ENCODE measurements at regions of chr3 and their contacts with region 1.

Region 1: DNA sequence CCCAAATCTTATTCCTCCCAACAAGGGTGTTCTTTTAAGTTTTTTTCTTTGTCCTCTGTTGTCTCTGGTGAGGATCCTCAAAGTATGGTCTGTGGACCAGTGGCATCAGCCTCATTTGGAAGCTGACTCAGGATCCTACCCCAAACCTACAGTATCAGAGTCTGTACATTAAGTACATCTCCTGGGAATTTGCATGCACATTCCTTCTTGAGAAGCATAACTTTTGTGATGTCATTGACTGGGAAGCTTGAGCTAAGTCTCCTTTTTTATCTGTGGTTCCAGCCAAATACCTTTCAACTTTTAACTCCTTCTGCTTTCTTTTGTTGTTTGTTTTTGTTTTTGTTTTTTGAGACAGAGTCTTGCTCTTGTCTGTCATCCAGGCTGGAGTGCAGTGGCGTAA is 40.5 kb downstream of the ARMC8 start:
- DNase-seq: no peak

Region 2: GRCh38 chr3:136380530-136380929 is 1847.1 kb before region 1 on chr3:
- intact Hi-C with region 1: no loop called
- DNase-seq: no peak

Region 3: DNA sequence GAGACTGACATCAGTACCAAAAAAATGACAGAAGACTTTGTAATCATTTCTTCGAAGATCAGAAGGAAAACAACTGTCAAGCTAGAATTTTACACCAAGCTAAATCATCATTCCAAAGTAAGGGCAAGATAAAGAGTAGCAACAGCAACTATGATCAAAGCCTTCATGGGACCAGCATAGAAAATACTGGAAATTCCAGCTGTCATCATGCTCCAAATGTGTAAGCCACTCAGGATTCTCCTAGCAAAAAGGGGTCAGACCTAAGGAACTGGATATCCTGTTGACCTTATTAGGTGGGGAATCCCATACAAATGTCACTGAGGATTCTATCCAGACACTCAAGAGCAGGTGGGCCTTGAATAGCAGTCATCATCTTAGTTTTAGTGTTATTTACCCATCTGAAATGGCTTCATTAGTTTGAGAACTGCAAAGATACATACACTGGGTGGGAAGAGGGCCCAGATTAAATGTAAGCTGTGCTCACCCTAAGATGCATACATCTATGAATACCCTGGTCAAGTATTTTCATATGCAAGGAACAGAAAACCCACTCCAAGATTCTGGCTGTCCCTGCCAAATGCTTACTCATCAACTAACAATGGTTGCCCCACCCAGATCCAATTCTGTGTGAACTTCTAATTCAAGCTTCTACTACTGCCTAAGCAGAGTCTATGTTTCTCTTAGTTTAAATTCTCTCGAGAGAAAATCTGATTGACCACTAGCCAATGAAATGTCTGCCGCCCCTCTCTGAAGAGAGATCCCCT is 184.2 kb before region 1 on chr3:
- intact Hi-C with region 1: no loop called
- DNase-seq: no peak

Region 4: DNA sequence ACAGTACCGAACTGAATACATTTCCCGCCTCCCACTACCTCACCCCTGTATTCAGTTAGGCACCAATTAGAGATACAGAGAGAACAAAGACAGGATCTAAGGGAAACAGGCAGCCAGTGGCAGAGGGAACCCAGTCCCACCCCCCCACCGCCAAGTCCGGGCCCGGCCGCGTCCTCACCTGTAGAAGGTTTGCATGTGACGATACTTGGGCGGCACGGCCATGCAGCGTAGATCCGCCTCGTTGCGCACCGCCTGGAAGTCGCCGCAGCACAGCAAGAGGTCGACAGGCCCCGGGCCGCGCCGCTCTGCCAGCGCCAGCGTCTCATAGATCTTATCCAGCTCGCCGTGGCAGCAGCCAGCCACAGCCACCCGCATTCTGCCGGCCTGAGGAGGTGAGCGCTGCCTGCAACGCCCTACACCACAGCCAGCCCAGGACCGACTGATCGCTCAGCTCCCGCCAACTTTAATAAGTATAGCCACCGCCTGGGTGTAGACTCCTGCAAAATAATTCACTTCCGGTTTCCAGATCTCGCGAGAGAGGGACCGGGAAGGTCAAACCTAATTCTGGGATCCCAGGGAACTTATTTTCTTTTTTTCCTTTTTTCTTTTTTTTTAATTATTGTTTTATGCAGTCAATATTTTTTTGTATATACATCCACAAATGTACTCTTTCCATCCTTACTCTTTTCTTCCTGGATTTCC is 53.1 kb before region 1 on chr3 and contains the start of gene DBR1:
- intact Hi-C with region 1: loop called in 1 of 2 experiments (anchors 10 kb)
- DNase-seq: peak; percentile 90
- total RNA-seq, gene DBR1: 10.5 to 10.6 TPM

Measured in posterior vena cava (tissue), 2 donors.